ENCODE measurements at regions of chr7 and their contacts with region 1.

Region 1: GRCh38 chr7:131692131-131692960 is 135.9 kb upstream of the PODXL start:
- DNase-seq: peak; percentile 25 to 80 (median 52)
- H3K4me3 ChIP-seq: no peak overlapping the region
- H3K27ac ChIP-seq: no peak overlapping the region
- H3K4me1 ChIP-seq: no peaks in the 10 kb centered on the region
- H3K27me3 ChIP-seq: peaks cover 14% of the 10 kb centered on the region
- CTCF ChIP-seq: peak; percentile 45 to 69 (median 62)
- POLR2A ChIP-seq: no peak

Region 2: GRCh38 chr7:131471605-131472004 is 220.7 kb before region 1 on chr7:
- intact Hi-C with region 1: no loop called
- DNase-seq: no peak
- H3K4me3 ChIP-seq: no peak overlapping the region
- H3K27ac ChIP-seq: no peak overlapping the region
- H3K4me1 ChIP-seq: no peaks in the 10 kb centered on the region
- H3K27me3 ChIP-seq: no peaks in the 10 kb centered on the region
- CTCF ChIP-seq: no peak
- POLR2A ChIP-seq: no peak

Region 3: DNA sequence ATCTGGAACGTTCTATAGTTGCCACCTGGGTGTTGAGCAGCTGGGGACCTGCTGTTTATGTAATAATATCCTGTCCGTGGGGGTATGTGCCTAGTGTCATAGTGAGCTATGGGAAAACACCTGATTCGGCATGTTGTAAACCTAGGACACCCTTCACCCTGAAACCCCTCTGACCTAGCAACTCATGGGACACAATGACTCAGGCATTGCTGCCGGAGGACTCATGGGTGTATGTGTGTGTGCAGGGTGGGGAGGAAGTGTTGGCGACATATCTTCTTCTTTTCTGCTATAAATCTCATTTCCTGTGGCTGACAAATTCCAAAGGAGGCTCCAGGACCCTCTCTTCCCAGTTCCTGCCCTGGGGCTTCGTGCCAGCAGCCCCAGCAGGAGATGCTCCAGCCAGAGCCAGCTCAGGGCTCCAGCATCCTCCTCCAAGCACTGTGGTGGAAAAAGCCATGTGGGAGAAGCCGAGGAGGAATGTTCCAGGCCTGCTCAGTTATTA is 59.0 kb before region 1 on chr7:
- intact Hi-C with region 1: no loop called
- DNase-seq: peak in 1 of 7 donors; percentile 31
- H3K4me3 ChIP-seq: no peak overlapping the region
- H3K27ac ChIP-seq: peak overlapping the region in 1 of 5 donors; percentile 53
- H3K4me1 ChIP-seq: no peaks in the 10 kb centered on the region
- H3K27me3 ChIP-seq: no peaks in the 10 kb centered on the region
- CTCF ChIP-seq: no peak
- POLR2A ChIP-seq: no peak

Region 4: GRCh38 chr7:132049462-132050304 is 357.3 kb after region 1 on chr7:
- intact Hi-C with region 1: loop called in 1 of 2 experiments (anchors 10 kb)
- DNase-seq: peak in 6 of 7 donors; percentile 32 to 64 (median 56)
- H3K4me3 ChIP-seq: no peak overlapping the region
- H3K27ac ChIP-seq: no peak overlapping the region
- H3K4me1 ChIP-seq: no peaks in the 10 kb centered on the region
- H3K27me3 ChIP-seq: no peaks in the 10 kb centered on the region
- CTCF ChIP-seq: peak; percentile 31 to 64 (median 54)
- POLR2A ChIP-seq: no peak